Left colon (tissue), 2 donors: ENCODE measurements at regions of chr6 and their contacts with region 1.

Region 1: GRCh38 chr6:47780510-47781356 is 1.1 kb upstream of the OPN5 start:
- DNase-seq: peak in 1 of 2 donors; percentile 26
- ATAC-seq: peak; percentile 96

Region 2: GRCh38 chr6:46312654-46313053 is 1468.1 kb before region 1 on chr6:
- intact Hi-C with region 1: no loop called
- DNase-seq: no peak
- ATAC-seq: no peak

Region 3: GRCh38 chr6:47414423-47415167 is 366.1 kb before region 1 on chr6:
- intact Hi-C with region 1: loop called in 1 of 2 experiments (anchors 5 kb)
- DNase-seq: no peak
- ATAC-seq: peak; percentile 55

Region 4: GRCh38 chr6:47545223-47545622 is 235.5 kb before region 1 on chr6:
- intact Hi-C with region 1: no loop called
- DNase-seq: peak in 1 of 2 donors; percentile 45
- ATAC-seq: peak; percentile 90

Region 5: GRCh38 chr6:47631269-47631772 is 149.4 kb before region 1 on chr6:
- intact Hi-C with region 1: loop called in 1 of 2 experiments (anchors 5 kb)
- DNase-seq: no peak
- ATAC-seq: peak; percentile 72